ENCODE measurements at regions of chr1 and their contacts with region 1.

Region 1: GRCh38 chr1:12229835-12230548 is at the start of gene VPS13D:
- DNase-seq: peak; percentile 72
- H3K4me3 ChIP-seq: peak within 1 kb of the TSS; percentile 63 to 72 (median 69)
- H3K27ac ChIP-seq: peak within 1 kb of the TSS; percentile 63
- H3K4me1 ChIP-seq: peaks cover 19% of the 10 kb centered on the region
- H3K27me3 ChIP-seq: no peaks in the 10 kb centered on the region
- CTCF ChIP-seq: peak; percentile 84 to 92
- total RNA-seq, gene VPS13D: 57.3 to 64.7 TPM

Region 2: GRCh38 chr1:12177999-12178441 is 52.0 kb before region 1 on chr1:
- CTCF ChIA-PET with region 1: no interaction called
- dilution Hi-C with region 1: loop called (anchors 5 kb)
- in situ Hi-C with region 1: no loop called
- intact Hi-C with region 1: no loop called
- DNase-seq: peak; percentile 42
- H3K4me3 ChIP-seq: no peak overlapping the region
- H3K27ac ChIP-seq: no peak overlapping the region
- H3K4me1 ChIP-seq: peaks cover 5% of the 10 kb centered on the region
- H3K27me3 ChIP-seq: peaks cover 3% of the 10 kb centered on the region
- CTCF ChIP-seq: no peak